ENCODE measurements at regions of chr6 and their contacts with region 1.

Region 1: GRCh38 chr6:36623547-36624459 is 29.6 kb downstream of the SRSF3 start:
- DNase-seq: peak; percentile 86 to 91 (median 88)
- ATAC-seq: peak; percentile 95
- H3K4me3 ChIP-seq: no peak overlapping the region
- H3K27ac ChIP-seq: no peak overlapping the region
- H3K4me1 ChIP-seq: peaks cover 0 to 4% of the 10 kb centered on the region in 2 experiments; a peak in 2 of 5 replicates
- H3K27me3 ChIP-seq: peaks cover 2 to 23% of the 10 kb centered on the region in 2 experiments; a peak in 3 of 5 replicates
- CTCF ChIP-seq: peak; percentile 95 to 97 (median 97)
- EP300 ChIP-seq: no peak
- POLR2A ChIP-seq: no peak
- RAD21 ChIP-seq: peak; percentile 97 to 99

Region 2: DNA sequence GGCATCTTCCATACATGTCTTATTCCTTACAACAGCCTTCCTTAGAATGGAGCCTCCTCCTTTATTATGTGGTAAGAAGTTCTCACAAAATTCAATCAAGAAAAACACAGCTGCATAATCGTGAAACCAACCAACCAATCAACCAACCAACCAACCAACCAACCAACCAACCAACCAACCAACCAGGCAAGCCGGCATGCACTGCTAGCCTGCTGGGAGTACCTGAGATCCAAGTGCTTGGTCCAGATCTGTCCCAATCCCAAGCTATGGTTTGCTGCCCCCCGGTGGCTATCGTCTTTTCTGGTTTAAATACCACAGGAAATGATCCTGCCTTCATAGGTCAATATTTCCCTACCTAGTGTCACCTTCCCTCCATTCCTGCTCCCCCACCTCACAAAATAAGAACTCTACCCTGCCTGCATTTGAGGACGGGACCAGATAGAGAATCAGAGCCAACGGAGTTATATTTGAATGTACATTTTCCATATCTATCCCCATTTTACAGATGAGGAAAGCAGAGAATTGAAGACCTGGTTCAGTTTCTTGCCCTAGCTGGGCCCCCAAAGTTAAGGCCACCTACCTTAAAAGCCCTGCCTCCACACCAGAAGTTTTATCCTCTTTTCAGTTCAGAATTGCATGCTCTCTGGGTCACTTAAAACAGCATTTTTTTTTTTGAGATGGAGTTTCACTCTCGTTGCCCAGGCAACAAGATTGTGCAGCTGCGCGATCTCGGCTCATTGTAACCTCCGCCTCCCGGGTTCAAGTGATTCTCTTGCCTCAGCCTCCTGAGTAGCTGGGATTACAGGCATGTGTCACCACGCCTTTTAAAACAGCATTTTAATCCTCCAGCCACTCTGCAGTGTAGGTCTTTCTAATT is 100.9 kb after region 1 on chr6:
- CTCF ChIA-PET with region 1: interaction called, 5 read pairs
- POLR2A ChIA-PET with region 1: interaction called, 3 read pairs
- in situ Hi-C with region 1: loop called (anchors 10 kb)
- intact Hi-C with region 1: loop called (anchors 1 kb)
- DNase-seq: peak; percentile 80 to 82 (median 80)
- ATAC-seq: peak; percentile 86
- H3K4me3 ChIP-seq: no peak overlapping the region
- H3K27ac ChIP-seq: no peak overlapping the region
- H3K4me1 ChIP-seq: peaks cover 0 to 9% of the 10 kb centered on the region in 2 experiments; a peak in 1 of 5 replicates
- H3K27me3 ChIP-seq: peaks cover 22 to 57% of the 10 kb centered on the region in 2 experiments
- CTCF ChIP-seq: peak; percentile 83 to 90 (median 86)
- EP300 ChIP-seq: no peak
- POLR2A ChIP-seq: no peak
- RAD21 ChIP-seq: peak; percentile 89 to 97

Region 3: GRCh38 chr6:36743538-36744303 is 119.9 kb after region 1 on chr6:
- CTCF ChIA-PET with region 1: no interaction called
- POLR2A ChIA-PET with region 1: no interaction called
- in situ Hi-C with region 1: no loop called
- intact Hi-C with region 1: no loop called
- DNase-seq: peak in 2 of 4 experiments; percentile 70 to 71
- ATAC-seq: no peak
- H3K4me3 ChIP-seq: no peak overlapping the region
- H3K27ac ChIP-seq: no peak overlapping the region
- H3K4me1 ChIP-seq: peaks cover 0 to 15% of the 10 kb centered on the region in 2 experiments; a peak in 4 of 5 replicates
- H3K27me3 ChIP-seq: peaks cover 25 to 84% of the 10 kb centered on the region in 2 experiments; a peak in 4 of 5 replicates
- CTCF ChIP-seq: no peak
- EP300 ChIP-seq: no peak
- POLR2A ChIP-seq: no peak
- RAD21 ChIP-seq: no peak

Measured in K562 (cell line).